Naive thymus-derived CD4-positive, alpha-beta T cell (primary cell): ENCODE measurements at regions of chr2 and their contacts with region 1.

Region 1: GRCh38 chr2:240021488-240022104 is 3.5 kb downstream of the NDUFA10 start:
- DNase-seq: peak; percentile 18 to 68 (median 51)
- ATAC-seq: peak; percentile 43
- H3K4me3 ChIP-seq: no peak overlapping the region
- H3K4me3 Mint-ChIP-seq: no peak overlapping the region
- H3K27ac ChIP-seq: no peak overlapping the region
- H3K27ac Mint-ChIP-seq: peak overlapping the region in 1 of 9 donors; percentile 32
- H3K4me1 ChIP-seq: peaks cover 8 to 15% of the 10 kb centered on the region in 2 donors
- H3K4me1 Mint-ChIP-seq: peaks cover 15 to 39% (median 35%) of the 10 kb centered on the region in 7 donors
- H3K27me3 ChIP-seq: no peaks in the 10 kb centered on the region
- H3K27me3 Mint-ChIP-seq: peaks cover 0 to 2% (median 0%) of the 10 kb centered on the region in 5 donors

Region 2: GRCh38 chr2:239944694-239945551 is 76.7 kb before region 1 on chr2:
- CTCF ChIA-PET with region 1: no interaction called
- POLR2A ChIA-PET with region 1: no interaction called
- intact Hi-C with region 1: loop called in 1 of 2 experiments (anchors 10 kb)
- DNase-seq: peak in 8 of 9 donors; percentile 8 to 40 (median 30)
- ATAC-seq: peak; percentile 81
- H3K4me3 ChIP-seq: peak overlapping the region; percentile 32
- H3K4me3 Mint-ChIP-seq: peak overlapping the region; percentile 45 to 81 (median 68)
- H3K27ac ChIP-seq: no peak overlapping the region
- H3K27ac Mint-ChIP-seq: peak overlapping the region; percentile 18 to 88 (median 55)
- H3K4me1 ChIP-seq: peaks cover 0 to 8% of the 10 kb centered on the region in 2 donors
- H3K4me1 Mint-ChIP-seq: peaks cover 6 to 15% (median 11%) of the 10 kb centered on the region in 7 donors
- H3K27me3 ChIP-seq: no peaks in the 10 kb centered on the region
- H3K27me3 Mint-ChIP-seq: no peaks in the 10 kb centered on the region

Region 3: DNA sequence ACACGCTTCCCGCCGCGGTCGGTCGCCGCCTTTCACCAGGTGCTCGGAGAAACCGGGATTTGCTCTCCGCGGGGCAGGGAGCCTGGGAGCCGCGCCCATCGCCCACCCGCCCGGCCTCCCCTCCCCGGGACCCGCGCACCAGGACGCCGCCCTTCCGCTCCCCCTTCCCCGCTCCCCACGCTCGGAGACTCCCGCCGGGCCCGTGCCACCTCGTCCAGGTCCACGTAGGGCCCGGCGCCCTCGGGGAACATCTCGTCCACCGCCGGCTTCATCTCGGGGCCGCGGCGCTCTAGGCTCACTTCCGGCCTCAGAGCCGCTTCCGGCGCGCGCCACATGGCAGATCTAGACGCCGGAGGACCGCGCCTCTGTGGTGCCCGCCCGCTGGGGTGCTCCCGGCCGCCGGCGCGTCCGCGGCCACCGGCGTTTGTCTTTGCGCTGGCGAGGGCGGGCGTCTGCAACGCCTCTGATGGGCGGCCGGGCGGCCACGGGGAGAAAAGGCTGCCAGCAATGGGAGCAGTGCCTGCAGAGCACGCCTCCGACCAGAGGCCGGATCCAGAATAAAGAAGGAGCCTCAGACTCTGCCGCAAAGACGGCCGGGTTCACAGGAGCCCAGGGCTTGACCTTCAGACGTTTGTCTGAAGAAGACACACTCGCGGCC is 114.5 kb after region 1 on chr2 and contains the start of gene COPS9:
- CTCF ChIA-PET with region 1: no interaction called
- POLR2A ChIA-PET with region 1: interaction called, 5 read pairs
- intact Hi-C with region 1: loop called (anchors 1 kb)
- DNase-seq: peak; percentile 74 to 89 (median 82)
- ATAC-seq: peak; percentile 98
- H3K4me3 ChIP-seq: peak within 1 kb of the TSS; percentile 95
- H3K4me3 Mint-ChIP-seq: peak within 1 kb of the TSS; percentile 79 to 97 (median 93)
- H3K27ac ChIP-seq: peak within 1 kb of the TSS; percentile 75
- H3K27ac Mint-ChIP-seq: peak within 1 kb of the TSS; percentile 78 to 95 (median 90)
- H3K4me1 ChIP-seq: peaks cover 17 to 18% of the 10 kb centered on the region in 2 donors
- H3K4me1 Mint-ChIP-seq: peaks cover 21 to 32% (median 28%) of the 10 kb centered on the region in 7 donors
- H3K27me3 ChIP-seq: no peaks in the 10 kb centered on the region
- H3K27me3 Mint-ChIP-seq: peaks cover 0 to 4% (median 0%) of the 10 kb centered on the region in 5 donors
- total RNA-seq, gene COPS9: 53.7 to 106 (median 71.8) TPM